Cardiac septum (tissue), 1 donor: ENCODE measurements at regions of chr7 and their contacts with region 1.

Region 1: DNA sequence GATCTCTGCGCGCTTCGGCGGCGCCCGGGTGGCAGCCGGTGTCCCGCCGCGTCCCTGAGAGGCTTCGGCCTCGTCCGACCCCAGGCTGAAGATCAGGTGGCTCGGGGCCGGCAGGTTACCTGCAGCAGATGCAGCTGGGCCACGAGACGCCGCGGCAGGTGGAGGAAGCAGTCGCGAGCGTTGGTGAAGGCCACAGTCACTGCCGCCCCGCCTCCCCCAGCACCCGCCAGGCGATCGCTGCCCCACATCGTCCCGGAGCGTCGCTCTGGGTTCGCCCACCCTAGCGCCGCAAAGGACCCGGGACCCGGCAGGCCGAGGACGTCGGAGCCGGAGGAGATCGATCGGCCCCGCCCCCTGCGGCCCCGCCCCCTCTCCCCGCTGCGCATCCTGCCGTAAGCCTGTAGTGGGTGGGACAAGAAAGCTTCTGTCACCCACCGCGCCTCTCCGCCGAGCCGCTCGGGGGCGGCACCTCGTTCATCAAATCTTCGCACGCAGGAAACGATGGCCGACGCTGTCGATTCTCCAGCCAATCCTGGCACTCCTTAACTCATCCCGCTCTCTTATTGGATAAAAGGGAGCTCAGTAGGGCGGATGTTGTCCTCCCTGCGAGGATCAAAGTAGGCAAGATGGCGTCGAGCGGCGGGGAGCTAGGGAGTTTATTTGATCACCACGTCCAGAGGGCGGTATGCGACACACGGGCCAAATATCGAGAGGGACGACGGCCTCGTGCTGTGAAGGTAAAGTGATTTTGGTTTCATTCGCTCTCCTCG is at the starts of genes PEX1 and RBM48:
- DNase-seq: peak; percentile 98
- total RNA-seq, gene PEX1: 13.9 TPM
- total RNA-seq, gene RBM48: 9.7 TPM

Region 2: GRCh38 chr7:92313055-92313454 is 215.3 kb before region 1 on chr7:
- intact Hi-C with region 1: no loop called
- DNase-seq: no peak

Region 3: DNA sequence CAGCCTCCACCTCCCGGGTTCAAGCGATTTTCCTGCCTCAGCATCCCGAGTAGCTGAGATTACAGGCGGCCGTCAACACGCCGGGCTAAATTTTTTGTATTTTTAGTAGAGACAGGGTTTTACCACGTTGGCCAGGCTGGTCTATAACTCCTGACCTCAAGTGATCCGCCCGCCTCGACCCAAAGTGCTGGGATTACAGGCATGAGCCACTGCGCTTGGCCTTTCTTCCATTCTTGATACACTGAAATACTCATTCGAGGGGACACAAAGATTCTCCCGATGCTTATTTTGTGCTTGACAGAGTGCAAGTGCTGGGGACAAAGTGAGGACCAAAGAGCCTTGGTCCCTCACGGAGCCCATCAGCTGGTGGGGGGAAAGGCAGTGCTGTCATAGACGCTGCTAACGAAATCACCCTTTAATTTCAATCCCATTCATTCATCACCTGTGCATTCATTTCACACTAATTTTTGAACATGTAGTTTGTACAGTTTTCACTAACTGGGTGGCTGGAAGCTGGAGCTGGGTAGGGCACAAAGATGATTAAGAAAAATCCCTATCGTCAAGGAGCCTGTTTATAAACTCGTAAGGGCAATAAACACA is 62.4 kb after region 1 on chr7:
- intact Hi-C with region 1: loop called (anchors 1 kb)
- DNase-seq: no peak